CD8-positive, alpha-beta T cell (primary cell): ENCODE measurements at regions of chr2 and their contacts with region 1.

Region 1: GRCh38 chr2:207625018-207625907 is at the start of gene METTL21A:
- DNase-seq: peak; percentile 88 to 99 (median 95)
- ATAC-seq: peak; percentile 82
- H3K4me3 ChIP-seq: peak within 1 kb of the TSS; percentile 91 to 97
- H3K4me3 Mint-ChIP-seq: peak within 1 kb of the TSS; percentile 96
- H3K27ac ChIP-seq: peak within 1 kb of the TSS; percentile 95 to 97
- H3K27ac Mint-ChIP-seq: peak within 1 kb of the TSS; percentile 96
- H3K4me1 ChIP-seq: peaks cover 18% of the 10 kb centered on the region
- H3K4me1 Mint-ChIP-seq: peaks cover 43% of the 10 kb centered on the region
- H3K27me3 ChIP-seq: no peaks in the 10 kb centered on the region
- H3K27me3 Mint-ChIP-seq: no peaks in the 10 kb centered on the region
- CTCF ChIP-seq: peak; percentile 49
- total RNA-seq, gene METTL21A: 12.3 to 12.4 TPM

Region 2: DNA sequence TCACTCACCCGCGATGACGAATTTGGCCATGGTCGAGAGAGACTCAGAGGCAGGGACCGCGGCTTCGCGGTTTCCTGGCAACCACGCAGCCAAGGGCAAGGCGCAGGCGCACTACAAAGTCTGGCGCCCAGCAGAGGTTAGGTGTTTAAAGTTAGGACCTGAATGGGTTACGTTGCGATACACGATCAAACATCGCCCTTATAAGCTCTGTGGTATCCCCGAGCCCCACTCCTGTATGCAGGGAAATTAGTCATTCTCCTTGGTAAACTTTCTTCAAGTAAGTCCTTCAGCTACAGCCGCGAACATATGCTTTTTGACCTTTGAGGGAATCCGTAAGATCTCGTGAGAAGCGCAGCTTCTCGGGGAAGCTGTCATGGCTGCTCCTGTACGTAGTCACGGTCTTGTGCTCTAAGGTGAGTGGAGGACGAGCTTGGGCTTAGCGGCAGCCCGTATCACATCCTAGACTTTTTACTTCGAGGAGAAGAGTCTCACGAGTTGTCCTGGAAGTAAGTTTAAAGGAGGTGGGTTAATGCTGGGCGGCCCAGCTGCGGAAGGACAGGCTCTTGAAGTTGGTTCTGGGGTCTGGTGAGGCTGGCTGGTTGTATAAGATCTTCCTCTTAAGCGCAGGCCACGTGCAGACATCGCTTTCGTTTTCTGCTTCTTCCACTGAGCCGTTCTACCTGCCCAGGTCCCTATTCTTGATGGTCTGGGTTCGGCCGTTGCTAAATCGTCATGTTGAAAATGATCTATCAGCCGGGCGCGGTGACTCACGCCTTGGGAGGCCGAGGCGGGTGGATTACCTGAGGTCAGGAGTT is 859.8 kb before region 1 on chr2 and contains the starts of genes FASTKD2 and MDH1B:
- CTCF ChIA-PET with region 1: no interaction called
- POLR2A ChIA-PET with region 1: interaction called, 4 read pairs
- intact Hi-C with region 1: loop called (anchors 1 to 10 kb)
- DNase-seq: peak; percentile 64 to 94 (median 81)
- ATAC-seq: peak; percentile 87
- H3K4me3 ChIP-seq: peak within 1 kb of the TSS; percentile 62 to 94
- H3K4me3 Mint-ChIP-seq: peak within 1 kb of the TSS; percentile 94
- H3K27ac ChIP-seq: peak within 1 kb of the TSS; percentile 93 to 97
- H3K27ac Mint-ChIP-seq: peak within 1 kb of the TSS; percentile 98
- H3K4me1 ChIP-seq: peaks cover 40% of the 10 kb centered on the region
- H3K4me1 Mint-ChIP-seq: peaks cover 41% of the 10 kb centered on the region
- H3K27me3 ChIP-seq: no peaks in the 10 kb centered on the region
- H3K27me3 Mint-ChIP-seq: no peaks in the 10 kb centered on the region
- CTCF ChIP-seq: no peak
- total RNA-seq, gene FASTKD2: 31.3 to 33.8 TPM
- total RNA-seq, gene MDH1B: 0.19 to 0.33 TPM

Region 3: DNA sequence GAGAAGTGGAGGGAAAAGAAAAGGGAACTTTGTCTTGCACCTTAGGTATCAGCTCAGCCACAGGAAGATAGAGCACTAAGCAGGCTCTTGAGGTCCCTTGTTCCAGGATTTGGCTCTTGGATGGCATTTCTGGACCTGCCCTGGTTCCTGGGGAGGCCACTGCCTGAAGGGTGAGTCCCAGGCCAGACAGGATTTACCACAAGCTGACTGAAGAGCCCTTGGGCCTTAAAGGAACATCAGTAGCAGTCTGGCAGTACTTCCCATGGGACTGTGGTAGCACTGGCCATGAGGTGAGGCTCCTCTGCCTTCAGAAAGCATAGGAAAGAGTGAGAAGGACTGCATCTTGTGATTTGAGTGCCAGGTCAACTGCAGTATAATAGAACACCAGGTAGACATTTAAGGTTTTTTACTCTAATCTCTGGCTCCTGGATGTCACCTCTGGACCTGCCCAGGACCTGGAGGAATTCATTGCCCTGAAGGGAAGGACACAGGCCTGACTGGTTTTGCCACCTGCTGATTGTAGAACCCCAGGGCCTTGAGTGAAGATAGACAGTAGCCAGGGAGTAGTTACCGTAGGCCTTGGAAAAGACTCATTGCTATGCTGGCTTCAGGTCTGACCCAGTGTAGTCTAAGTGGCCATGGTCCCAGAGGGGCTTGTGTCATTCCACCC is 249.9 kb before region 1 on chr2:
- CTCF ChIA-PET with region 1: no interaction called
- POLR2A ChIA-PET with region 1: no interaction called
- intact Hi-C with region 1: no loop called
- DNase-seq: no peak
- ATAC-seq: no peak
- H3K4me3 ChIP-seq: no peak overlapping the region
- H3K4me3 Mint-ChIP-seq: no peak overlapping the region
- H3K27ac ChIP-seq: no peak overlapping the region
- H3K27ac Mint-ChIP-seq: no peak overlapping the region
- H3K4me1 ChIP-seq: no peaks in the 10 kb centered on the region
- H3K4me1 Mint-ChIP-seq: no peaks in the 10 kb centered on the region
- H3K27me3 ChIP-seq: no peaks in the 10 kb centered on the region
- H3K27me3 Mint-ChIP-seq: no peaks in the 10 kb centered on the region
- CTCF ChIP-seq: no peak

Region 4: DNA sequence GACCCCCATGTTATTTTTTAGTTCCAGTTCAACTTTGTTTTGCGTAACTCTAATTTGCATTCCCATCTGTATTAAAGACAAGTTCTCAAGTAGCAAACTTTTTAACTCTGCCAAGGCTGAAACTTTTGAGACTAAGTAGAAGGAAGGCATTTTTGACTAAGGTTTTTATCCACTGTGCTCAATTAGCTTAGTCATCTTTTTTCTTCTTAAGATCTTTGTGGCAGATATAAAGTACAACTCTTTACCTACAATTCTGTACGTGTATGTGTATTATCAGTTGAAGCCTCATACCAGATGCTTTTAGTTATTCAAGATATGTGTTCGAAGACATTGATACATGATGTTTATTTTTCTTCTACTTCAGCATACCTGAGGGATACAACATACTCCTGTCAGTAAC is 53.9 kb before region 1 on chr2:
- CTCF ChIA-PET with region 1: no interaction called
- POLR2A ChIA-PET with region 1: no interaction called
- intact Hi-C with region 1: loop called in 1 of 2 experiments (anchors 5 kb)
- DNase-seq: no peak
- ATAC-seq: no peak
- H3K4me3 ChIP-seq: no peak overlapping the region
- H3K4me3 Mint-ChIP-seq: no peak overlapping the region
- H3K27ac ChIP-seq: no peak overlapping the region
- H3K27ac Mint-ChIP-seq: no peak overlapping the region
- H3K4me1 ChIP-seq: no peaks in the 10 kb centered on the region
- H3K4me1 Mint-ChIP-seq: peaks cover 24% of the 10 kb centered on the region
- H3K27me3 ChIP-seq: no peaks in the 10 kb centered on the region
- H3K27me3 Mint-ChIP-seq: no peaks in the 10 kb centered on the region
- CTCF ChIP-seq: no peak

Region 5: DNA sequence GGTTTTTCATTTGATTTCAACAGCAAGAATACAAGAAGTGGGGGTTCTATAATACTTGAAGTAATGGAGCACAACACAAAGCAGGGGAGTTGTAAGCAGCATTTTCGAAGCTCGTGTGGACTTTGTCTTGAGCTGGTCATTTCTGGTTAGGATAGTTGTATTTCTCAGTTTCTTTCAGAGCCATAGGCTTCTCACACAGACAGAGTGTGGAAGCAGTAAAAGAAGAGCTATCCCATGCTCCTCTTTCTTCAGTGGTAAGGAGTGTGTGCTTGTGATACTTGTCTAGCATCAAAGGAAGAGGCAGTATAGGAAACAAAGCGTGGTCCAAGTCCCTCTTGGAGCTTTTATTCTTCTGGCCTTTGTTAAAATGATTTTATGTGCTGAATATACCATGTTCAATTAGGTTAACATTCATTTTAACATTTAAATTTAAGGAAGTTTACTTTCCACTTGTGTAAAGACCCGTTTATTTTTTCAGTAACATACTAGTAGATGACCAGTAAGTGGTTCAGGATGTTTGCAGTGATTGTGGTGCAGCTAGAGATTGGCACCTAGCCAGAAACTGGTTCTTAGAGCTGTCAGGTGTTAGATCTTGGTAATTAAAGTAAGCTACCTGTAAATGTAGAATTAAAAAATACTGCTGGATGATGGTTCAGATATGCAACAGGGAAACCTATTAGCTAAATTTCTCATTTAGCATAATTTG is 100.8 kb after region 1 on chr2:
- CTCF ChIA-PET with region 1: interaction called, 17 read pairs
- POLR2A ChIA-PET with region 1: no interaction called
- intact Hi-C with region 1: no loop called
- DNase-seq: peak in 3 of 9 experiments; percentile 21 to 47 (median 31)
- ATAC-seq: no peak
- H3K4me3 ChIP-seq: no peak overlapping the region
- H3K4me3 Mint-ChIP-seq: no peak overlapping the region
- H3K27ac ChIP-seq: no peak overlapping the region
- H3K27ac Mint-ChIP-seq: no peak overlapping the region
- H3K4me1 ChIP-seq: peaks cover 16% of the 10 kb centered on the region
- H3K4me1 Mint-ChIP-seq: peaks cover 24% of the 10 kb centered on the region
- H3K27me3 ChIP-seq: no peaks in the 10 kb centered on the region
- H3K27me3 Mint-ChIP-seq: no peaks in the 10 kb centered on the region
- CTCF ChIP-seq: no peak

Region 6: DNA sequence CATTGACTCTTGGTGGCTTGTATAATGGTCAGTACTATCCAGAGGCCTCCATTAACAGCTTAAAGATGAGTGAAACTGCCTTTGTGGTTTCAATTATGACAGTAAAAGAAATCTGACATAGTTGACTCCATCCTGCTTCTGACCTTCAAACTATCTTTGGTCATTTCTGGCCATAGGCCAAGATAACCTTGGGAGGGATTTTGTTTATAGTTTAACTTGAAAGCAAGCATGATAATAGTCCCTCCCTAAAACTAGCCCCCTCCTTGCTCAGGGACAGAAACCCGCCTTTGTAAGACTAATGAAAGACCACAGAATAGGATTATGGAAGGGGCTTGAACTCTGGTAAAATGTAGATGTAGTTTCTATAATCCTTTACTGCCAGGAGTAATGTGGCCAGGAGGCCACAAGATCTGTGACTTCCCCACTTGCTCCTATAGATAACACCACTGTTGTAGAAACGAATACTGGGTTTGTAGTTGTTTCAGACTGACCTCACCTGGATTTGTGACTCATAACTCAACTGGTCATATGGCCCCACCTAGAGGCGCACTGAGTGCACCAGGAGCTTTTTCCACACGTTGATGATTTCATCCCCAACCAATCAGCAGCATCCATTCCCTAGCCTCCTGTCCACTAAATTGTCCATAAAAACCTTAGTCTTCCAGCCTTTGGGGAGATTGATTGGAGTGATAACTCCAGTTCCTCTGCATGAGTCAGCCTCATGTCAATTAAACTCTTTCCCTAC is 408.7 kb after region 1 on chr2:
- CTCF ChIA-PET with region 1: interaction called, 7 read pairs
- POLR2A ChIA-PET with region 1: no interaction called
- intact Hi-C with region 1: loop called in 1 of 2 experiments (anchors 2 kb)
- DNase-seq: peak in 7 of 9 experiments; percentile 4 to 64 (median 48)
- ATAC-seq: peak; percentile 44
- H3K4me3 ChIP-seq: no peak overlapping the region
- H3K4me3 Mint-ChIP-seq: no peak overlapping the region
- H3K27ac ChIP-seq: no peak overlapping the region
- H3K27ac Mint-ChIP-seq: no peak overlapping the region
- H3K4me1 ChIP-seq: no peaks in the 10 kb centered on the region
- H3K4me1 Mint-ChIP-seq: no peaks in the 10 kb centered on the region
- H3K27me3 ChIP-seq: no peaks in the 10 kb centered on the region
- H3K27me3 Mint-ChIP-seq: no peaks in the 10 kb centered on the region
- CTCF ChIP-seq: peak; percentile 41

Region 7: GRCh38 chr2:208265801-208266552 is 640.7 kb after region 1 on chr2 and contains the start of gene PIKFYVE:
- CTCF ChIA-PET with region 1: no interaction called
- POLR2A ChIA-PET with region 1: interaction called, 7 read pairs
- intact Hi-C with region 1: loop called in 1 of 2 experiments (anchors 2 kb)
- DNase-seq: peak; percentile 71 to 95 (median 88)
- ATAC-seq: peak; percentile 80
- H3K4me3 ChIP-seq: peak within 1 kb of the TSS; percentile 70 to 86
- H3K4me3 Mint-ChIP-seq: peak within 1 kb of the TSS; percentile 86
- H3K27ac ChIP-seq: peak within 1 kb of the TSS; percentile 67 to 88
- H3K27ac Mint-ChIP-seq: peak within 1 kb of the TSS; percentile 98
- H3K4me1 ChIP-seq: peaks cover 21% of the 10 kb centered on the region
- H3K4me1 Mint-ChIP-seq: peaks cover 45% of the 10 kb centered on the region
- H3K27me3 ChIP-seq: no peaks in the 10 kb centered on the region
- H3K27me3 Mint-ChIP-seq: no peaks in the 10 kb centered on the region
- CTCF ChIP-seq: no peak
- total RNA-seq, gene PIKFYVE: 27.7 to 29.1 TPM